Mammary epithelial cell (primary cell): ENCODE measurements at regions of chr11 and their contacts with region 1.

Region 1: DNA sequence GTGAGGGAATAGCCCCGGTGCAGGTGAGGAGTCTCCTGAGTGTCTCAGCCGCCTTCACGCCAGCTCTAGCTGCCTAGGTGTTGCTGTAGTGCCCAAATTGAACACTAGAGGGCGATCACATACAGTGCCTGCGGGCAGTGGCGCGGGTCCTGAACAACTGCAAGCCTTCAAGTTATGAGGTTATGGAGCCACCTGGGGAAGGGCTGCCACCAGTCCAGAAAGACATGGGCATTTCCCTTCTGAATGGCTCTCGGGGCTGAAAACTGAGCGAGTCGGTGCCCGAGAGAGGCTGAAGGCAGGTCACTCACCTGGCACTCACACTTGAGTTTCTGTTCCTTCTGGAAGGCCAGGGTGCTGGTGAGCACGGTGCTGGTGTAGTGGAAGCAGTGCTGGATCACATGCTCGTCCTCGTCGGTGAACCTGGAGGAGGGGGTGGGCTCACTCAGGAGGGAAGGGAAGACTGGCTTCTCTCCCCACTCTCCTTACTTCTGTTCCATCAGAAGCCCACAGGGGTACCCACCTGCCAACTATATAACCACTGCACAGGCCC is 88.4 kb downstream of the PDE2A start:
- DNase-seq: peak; percentile 53
- H3K4me3 ChIP-seq: no peak overlapping the region
- H3K27ac ChIP-seq: no peak overlapping the region
- H3K4me1 ChIP-seq: peaks cover 8% of the 10 kb centered on the region
- H3K27me3 ChIP-seq: peaks cover 10% of the 10 kb centered on the region
- CTCF ChIP-seq: peak; percentile 80 to 83

Region 2: GRCh38 chr11:72642884-72643511 is 57.2 kb after region 1 on chr11:
- CTCF ChIA-PET with region 1: no interaction called
- dilution Hi-C with region 1: no loop called
- in situ Hi-C with region 1: no loop called
- intact Hi-C with region 1: loop called (anchors 1 kb)
- DNase-seq: no peak
- H3K4me3 ChIP-seq: peak overlapping the region in 2 of 3 experiments; percentile 55 to 66
- H3K27ac ChIP-seq: no peak overlapping the region
- H3K4me1 ChIP-seq: peaks cover 10% of the 10 kb centered on the region
- H3K27me3 ChIP-seq: peaks cover 5% of the 10 kb centered on the region
- CTCF ChIP-seq: peak; percentile 49 to 88